Activated CD8-positive, alpha-beta T cell treated with anti-CD3 and anti-CD28 coated beads, Interleukin-2, amount 10 ng/mL, durations not matched to agents 7 days and 5 days (primary cell): ENCODE measurements at regions of chr15 and their contacts with region 1.

Region 1: DNA sequence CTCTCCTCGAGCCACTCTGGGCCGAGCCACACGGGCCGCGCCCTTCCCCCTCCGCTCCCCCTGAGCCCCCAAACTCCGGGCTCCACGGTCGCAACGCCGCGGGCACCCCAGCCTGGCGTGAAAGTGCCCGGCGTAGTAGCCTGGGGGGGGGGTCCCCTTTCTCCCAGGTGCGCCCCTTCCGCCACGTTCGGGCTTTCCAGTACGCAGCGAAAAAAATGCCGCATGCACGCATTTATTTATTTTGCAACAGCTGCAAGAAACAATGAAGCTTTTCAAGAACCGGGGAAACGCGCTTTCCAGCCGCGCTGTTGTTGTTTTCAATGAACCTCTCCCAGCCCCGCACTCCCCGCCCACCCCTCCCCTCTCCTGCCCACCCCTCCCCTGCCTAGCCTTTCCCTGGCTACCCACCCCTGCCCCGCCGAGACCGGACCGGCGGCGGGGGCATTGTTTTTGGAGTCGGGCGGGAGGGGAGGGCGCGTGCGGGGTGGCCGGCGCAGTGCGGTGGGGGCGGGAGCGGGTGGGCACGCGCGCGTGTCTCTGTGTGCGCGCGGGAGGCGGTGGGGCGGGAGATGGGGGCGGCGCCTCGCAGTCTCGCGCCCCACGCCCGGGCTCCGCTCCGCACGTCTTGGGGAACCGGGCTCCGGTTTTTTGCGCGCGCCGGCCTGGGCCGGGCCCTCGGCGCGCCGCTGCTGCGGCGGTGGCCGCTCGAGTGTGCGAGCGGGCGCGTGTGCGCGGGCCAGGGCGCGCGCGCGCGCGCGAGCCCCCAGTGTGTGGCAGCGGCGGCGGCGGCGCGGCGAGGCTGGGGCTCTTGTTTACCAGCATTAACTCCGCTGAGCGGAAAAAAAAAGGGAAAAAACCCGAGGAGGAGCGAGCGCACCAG is at the start of gene IGF1R:
- DNase-seq: peak; percentile 86
- ATAC-seq: peak; percentile 62
- H3K4me3 Mint-ChIP-seq: peak within 1 kb of the TSS; percentile 81
- H3K27ac Mint-ChIP-seq: peak within 1 kb of the TSS; percentile 81
- H3K4me1 Mint-ChIP-seq: peaks cover 31% of the 10 kb centered on the region
- H3K27me3 Mint-ChIP-seq: peaks cover 42% of the 10 kb centered on the region
- total RNA-seq, gene IGF1R: 9.1 to 10.6 TPM

Region 2: DNA sequence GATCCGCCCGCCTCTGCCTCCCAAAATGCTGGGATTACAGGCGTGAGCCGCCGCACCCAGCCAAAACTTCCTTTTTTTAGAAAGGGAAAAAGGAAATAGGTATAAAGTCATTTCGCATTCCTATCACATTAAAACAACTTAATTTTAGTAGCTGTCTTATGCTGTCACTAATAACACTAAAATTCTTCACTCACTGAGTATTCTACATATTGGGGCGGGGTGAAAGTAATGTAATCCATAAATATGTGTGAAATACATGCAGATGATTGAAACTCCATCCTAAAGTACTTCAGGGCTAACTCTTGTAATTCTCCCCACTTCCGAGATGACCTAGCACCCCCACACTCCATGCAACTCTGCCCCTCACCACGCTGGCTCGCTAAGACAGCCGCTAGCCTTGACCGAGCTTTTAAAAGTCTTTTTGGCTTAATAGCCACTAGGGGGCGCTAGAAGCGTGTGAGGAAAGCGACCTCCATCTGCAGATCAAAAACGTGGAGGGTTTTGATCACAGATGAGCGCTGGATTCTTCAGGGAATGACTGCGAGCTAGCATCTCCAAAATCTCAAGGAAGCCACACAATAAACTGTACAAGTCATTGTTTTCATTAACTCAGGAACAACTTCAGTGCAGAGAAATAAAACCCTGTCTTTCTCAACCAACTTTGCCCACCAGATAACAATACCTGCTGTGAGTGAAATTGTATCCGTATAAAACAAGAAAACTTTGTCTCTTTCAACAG is 129.0 kb before region 1 on chr15:
- CTCF ChIA-PET with region 1: interaction called, 27 read pairs
- POLR2A ChIA-PET with region 1: interaction called, 4 read pairs
- DNase-seq: peak; percentile 63
- ATAC-seq: peak; percentile 86
- H3K4me3 Mint-ChIP-seq: no peak overlapping the region
- H3K27ac Mint-ChIP-seq: no peak overlapping the region
- H3K4me1 Mint-ChIP-seq: peaks cover 7% of the 10 kb centered on the region
- H3K27me3 Mint-ChIP-seq: peaks cover 4% of the 10 kb centered on the region

Region 3: DNA sequence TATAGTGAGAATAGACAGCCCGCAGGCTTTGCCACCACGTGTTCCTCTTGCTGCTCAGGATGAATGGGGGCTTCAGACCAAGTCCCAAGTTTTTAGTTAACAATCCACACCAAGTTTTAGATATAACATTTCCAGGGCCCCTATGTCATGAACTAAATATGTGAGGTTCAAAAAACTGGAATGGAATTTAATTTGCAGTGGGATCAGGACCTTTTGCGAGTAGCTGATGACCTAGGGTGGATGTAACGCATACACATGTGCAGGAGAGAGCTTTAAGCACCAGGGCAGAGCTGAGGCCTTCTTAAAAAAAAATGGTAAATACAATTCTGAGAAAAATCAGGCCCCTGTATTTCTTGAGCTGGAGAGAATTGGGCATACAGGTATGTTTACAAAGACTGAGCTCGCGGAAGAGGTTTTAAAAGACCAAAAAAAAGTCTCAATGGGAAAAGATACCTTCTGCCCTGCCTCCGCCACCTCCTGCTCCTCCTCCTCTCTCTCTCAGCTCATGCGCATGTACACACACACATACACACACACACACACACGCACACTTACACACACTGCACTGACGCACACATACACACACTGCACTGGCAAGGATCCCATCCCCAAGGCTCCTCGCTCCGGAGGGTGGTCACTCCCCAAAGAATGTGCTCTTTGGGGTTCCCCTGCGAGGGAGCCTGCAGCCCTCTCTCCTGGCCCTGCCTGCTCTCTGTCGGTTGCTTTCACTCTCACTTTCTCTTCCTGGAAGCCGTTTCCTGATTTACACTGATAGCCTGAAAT is 47.9 kb before region 1 on chr15:
- CTCF ChIA-PET with region 1: interaction called, 10 read pairs
- POLR2A ChIA-PET with region 1: interaction called, 5 read pairs
- DNase-seq: peak; percentile 66
- ATAC-seq: peak; percentile 93
- H3K4me3 Mint-ChIP-seq: peak overlapping the region; percentile 79
- H3K27ac Mint-ChIP-seq: peak overlapping the region; percentile 89
- H3K4me1 Mint-ChIP-seq: peaks cover 34% of the 10 kb centered on the region
- H3K27me3 Mint-ChIP-seq: peaks cover 6% of the 10 kb centered on the region

Region 4: DNA sequence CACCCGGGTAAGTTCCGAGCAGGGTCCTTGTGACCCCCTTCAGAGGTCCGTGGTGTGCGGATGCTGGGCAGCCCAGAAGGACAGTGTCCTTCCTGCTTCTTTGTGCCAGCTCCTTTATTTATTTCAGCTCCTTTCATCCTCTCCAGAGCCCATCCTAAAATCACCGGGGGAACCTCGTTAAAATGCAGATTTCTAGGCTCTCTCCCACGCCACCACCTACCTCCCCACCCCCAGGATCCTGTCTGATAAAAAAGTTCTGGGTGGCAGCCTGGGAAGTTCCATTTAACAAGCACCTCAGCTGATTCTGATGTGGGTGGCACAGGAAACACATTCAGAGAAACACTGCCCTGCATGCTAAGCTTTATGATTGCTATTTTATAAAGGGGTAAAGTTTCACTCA is 12.2 kb before region 1 on chr15:
- CTCF ChIA-PET with region 1: interaction called, 13 read pairs
- POLR2A ChIA-PET with region 1: no interaction called
- DNase-seq: no peak
- ATAC-seq: no peak
- H3K4me3 Mint-ChIP-seq: no peak overlapping the region
- H3K27ac Mint-ChIP-seq: no peak overlapping the region
- H3K4me1 Mint-ChIP-seq: peaks cover 8% of the 10 kb centered on the region
- H3K27me3 Mint-ChIP-seq: no peaks in the 10 kb centered on the region

Region 5: GRCh38 chr15:98658831-98659699 is 11.1 kb after region 1 on chr15:
- CTCF ChIA-PET with region 1: interaction called, 20 read pairs
- POLR2A ChIA-PET with region 1: no interaction called
- DNase-seq: peak; percentile 54
- ATAC-seq: peak; percentile 88
- H3K4me3 Mint-ChIP-seq: no peak overlapping the region
- H3K27ac Mint-ChIP-seq: no peak overlapping the region
- H3K4me1 Mint-ChIP-seq: peaks cover 2% of the 10 kb centered on the region
- H3K27me3 Mint-ChIP-seq: peaks cover 16% of the 10 kb centered on the region

Region 6: GRCh38 chr15:98856218-98856907 is 208.3 kb after region 1 on chr15:
- CTCF ChIA-PET with region 1: interaction called, 15 read pairs
- POLR2A ChIA-PET with region 1: no interaction called
- DNase-seq: no peak
- ATAC-seq: no peak
- H3K4me3 Mint-ChIP-seq: no peak overlapping the region
- H3K27ac Mint-ChIP-seq: no peak overlapping the region
- H3K4me1 Mint-ChIP-seq: peaks cover 46% of the 10 kb centered on the region
- H3K27me3 Mint-ChIP-seq: no peaks in the 10 kb centered on the region